ENCODE measurements at regions of chr2 and their contacts with region 1.

Region 1: DNA sequence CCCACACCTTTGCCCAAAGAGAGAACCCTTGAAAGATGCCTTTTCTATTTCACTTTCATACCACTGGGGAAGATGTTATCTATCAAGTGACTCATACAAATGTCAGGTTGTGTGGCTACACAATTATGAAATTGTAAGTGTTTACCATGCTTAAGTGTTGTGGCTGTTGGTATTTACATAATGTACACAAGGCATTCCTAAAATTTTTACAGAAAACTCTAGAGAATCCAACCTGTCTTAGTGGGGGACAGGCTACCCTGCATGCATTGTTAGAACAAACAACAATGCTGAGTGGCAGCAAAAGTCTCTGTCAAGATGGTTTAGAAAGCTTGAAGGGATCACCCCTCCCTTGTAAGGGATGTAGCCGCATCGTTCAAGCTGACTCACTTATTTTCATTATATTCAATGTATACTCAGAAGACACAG is 5.5 kb upstream of the MGAT4A start:
- DNase-seq: peak; percentile 64
- ATAC-seq: peak; percentile 81
- H3K4me3 Mint-ChIP-seq: peak overlapping the region; percentile 45
- H3K27ac Mint-ChIP-seq: peak overlapping the region; percentile 86
- H3K4me1 Mint-ChIP-seq: peaks cover 74% of the 10 kb centered on the region
- H3K27me3 Mint-ChIP-seq: no peaks in the 10 kb centered on the region
- CTCF ChIP-seq: no peak

Region 2: DNA sequence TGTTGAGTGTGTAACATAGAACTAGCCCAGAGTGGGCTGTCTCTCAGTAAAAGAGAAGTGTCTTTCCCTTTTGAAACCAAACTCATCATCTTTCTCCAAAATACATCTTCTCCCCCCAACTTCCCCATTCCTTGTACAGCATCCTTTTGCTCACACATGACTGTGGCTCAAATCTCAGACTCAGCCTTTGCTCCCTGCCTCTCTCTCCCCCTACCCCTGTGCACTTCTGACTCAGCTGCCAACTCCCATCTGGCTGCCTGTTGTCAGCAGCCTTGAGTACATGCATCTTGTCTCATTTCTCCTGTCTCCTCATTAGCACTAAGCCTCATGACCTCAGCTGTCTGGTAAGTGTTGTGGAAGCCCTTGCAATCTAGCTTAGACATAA is 12.6 kb after region 1 on chr2:
- CTCF ChIA-PET with region 1: interaction called, 4 read pairs
- POLR2A ChIA-PET with region 1: interaction called, 19 read pairs
- intact Hi-C with region 1: no loop called
- DNase-seq: no peak
- ATAC-seq: peak; percentile 61
- H3K4me3 Mint-ChIP-seq: no peak overlapping the region
- H3K27ac Mint-ChIP-seq: peak overlapping the region; percentile 2
- H3K4me1 Mint-ChIP-seq: peaks cover 36% of the 10 kb centered on the region
- H3K27me3 Mint-ChIP-seq: no peaks in the 10 kb centered on the region
- CTCF ChIP-seq: no peak

Measured in activated CD8-positive, alpha-beta T cell treated with anti-CD3 and anti-CD28 coated beads for 36 hours (primary cell).